Activated naive CD4-positive, alpha-beta T cell treated with anti-CD3 and anti-CD28 coated beads for 36 hours (primary cell): ENCODE measurements at regions of chr1 and their contacts with region 1.

Region 1: DNA sequence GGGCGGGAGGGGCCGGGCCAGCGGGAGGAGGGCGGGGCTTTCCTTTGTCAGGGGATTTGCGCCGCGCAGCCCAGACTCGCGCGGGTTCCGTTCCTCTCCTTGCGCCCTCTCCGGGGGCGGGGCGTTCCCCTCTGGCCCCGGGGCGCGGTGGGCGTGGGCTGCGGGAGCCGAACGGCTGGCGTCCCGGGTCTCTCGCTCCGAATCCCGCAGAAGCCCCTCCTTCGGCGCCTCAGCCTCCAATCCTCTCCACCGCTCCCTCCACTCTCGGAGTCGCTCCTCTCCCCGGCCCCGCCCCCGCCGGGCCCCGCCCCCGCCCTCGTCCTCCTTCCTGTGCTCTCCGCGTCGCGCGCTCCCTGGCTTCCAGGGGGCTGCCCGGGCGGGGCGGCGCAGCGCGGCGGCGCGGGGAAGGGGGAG is 82.8 kb upstream of the BMP8A start:
- DNase-seq: peak; percentile 82
- H3K4me3 Mint-ChIP-seq: peak overlapping the region; percentile 81
- H3K27ac Mint-ChIP-seq: no peak overlapping the region
- H3K4me1 Mint-ChIP-seq: peaks cover 60% of the 10 kb centered on the region
- H3K27me3 Mint-ChIP-seq: no peaks in the 10 kb centered on the region

Region 2: DNA sequence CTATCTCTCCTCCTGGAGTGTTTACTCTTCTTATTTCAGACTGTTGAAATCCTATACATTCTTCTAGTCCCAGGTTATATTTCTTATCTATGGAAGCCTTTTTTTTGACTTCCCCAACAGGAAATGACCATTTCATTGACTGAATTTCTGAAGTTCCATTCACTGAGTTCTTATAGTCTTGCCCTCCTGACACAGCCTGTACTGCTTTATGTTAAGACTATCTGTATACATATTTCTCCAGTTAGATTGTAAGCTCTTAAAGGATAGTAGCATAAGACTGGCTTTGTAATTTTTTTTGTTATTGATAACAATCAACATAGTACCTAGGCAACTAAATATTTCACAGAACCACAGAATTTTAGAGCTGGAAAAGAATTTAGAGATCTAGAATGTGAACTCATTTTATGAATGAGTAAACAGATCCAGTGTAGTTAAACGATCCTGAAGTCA is 219.0 kb before region 1 on chr1:
- CTCF ChIA-PET with region 1: interaction called, 25 read pairs
- intact Hi-C with region 1: loop called (anchors 1 kb)
- DNase-seq: no peak
- H3K4me3 Mint-ChIP-seq: no peak overlapping the region
- H3K27ac Mint-ChIP-seq: no peak overlapping the region
- H3K4me1 Mint-ChIP-seq: peaks cover 86% of the 10 kb centered on the region
- H3K27me3 Mint-ChIP-seq: no peaks in the 10 kb centered on the region

Region 3: GRCh38 chr1:39360731-39361130 is 47.9 kb before region 1 on chr1:
- CTCF ChIA-PET with region 1: interaction called, 10 read pairs
- intact Hi-C with region 1: no loop called
- DNase-seq: no peak
- H3K4me3 Mint-ChIP-seq: no peak overlapping the region
- H3K27ac Mint-ChIP-seq: no peak overlapping the region
- H3K4me1 Mint-ChIP-seq: no peaks in the 10 kb centered on the region
- H3K27me3 Mint-ChIP-seq: no peaks in the 10 kb centered on the region

Region 4: DNA sequence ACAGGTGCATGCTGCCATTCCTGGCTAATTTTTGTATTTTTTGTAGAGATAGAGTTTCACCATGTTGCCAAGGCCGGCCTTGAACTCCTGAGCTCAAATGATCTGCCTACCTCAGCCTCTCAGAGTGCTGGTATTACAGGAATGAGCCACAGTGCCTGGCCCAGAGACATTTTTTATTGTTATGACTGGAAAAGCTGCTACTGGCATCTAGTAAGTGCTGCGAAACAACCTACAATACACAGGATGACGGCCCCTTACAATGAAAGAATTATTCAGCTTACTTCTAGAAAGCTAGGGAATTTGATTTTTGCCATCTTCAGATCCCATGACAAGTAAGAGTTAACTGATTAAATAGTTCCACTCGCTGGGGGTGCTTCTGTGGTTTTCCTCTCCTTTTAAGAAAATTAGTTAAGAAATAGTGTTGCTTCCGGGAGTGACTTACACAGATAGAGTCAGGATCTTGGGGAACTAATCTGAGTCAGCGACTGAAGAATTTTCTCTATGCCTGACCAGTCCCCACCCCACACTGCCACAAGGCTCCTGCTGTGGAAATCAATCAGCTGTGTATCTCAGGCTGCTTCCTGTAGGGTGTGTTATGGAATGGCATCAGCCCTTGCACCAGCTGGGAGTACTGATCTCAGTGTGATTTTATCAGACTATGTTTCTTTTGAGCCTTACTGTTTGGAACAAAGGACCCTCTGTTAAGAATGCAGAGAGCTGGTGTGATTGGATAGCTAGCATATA is 10.2 kb before region 1 on chr1:
- CTCF ChIA-PET with region 1: interaction called, 42 read pairs
- intact Hi-C with region 1: loop called (anchors 1 kb)
- DNase-seq: peak; percentile 58
- H3K4me3 Mint-ChIP-seq: no peak overlapping the region
- H3K27ac Mint-ChIP-seq: peak overlapping the region; percentile 68
- H3K4me1 Mint-ChIP-seq: peaks cover 63% of the 10 kb centered on the region
- H3K27me3 Mint-ChIP-seq: no peaks in the 10 kb centered on the region

Region 5: DNA sequence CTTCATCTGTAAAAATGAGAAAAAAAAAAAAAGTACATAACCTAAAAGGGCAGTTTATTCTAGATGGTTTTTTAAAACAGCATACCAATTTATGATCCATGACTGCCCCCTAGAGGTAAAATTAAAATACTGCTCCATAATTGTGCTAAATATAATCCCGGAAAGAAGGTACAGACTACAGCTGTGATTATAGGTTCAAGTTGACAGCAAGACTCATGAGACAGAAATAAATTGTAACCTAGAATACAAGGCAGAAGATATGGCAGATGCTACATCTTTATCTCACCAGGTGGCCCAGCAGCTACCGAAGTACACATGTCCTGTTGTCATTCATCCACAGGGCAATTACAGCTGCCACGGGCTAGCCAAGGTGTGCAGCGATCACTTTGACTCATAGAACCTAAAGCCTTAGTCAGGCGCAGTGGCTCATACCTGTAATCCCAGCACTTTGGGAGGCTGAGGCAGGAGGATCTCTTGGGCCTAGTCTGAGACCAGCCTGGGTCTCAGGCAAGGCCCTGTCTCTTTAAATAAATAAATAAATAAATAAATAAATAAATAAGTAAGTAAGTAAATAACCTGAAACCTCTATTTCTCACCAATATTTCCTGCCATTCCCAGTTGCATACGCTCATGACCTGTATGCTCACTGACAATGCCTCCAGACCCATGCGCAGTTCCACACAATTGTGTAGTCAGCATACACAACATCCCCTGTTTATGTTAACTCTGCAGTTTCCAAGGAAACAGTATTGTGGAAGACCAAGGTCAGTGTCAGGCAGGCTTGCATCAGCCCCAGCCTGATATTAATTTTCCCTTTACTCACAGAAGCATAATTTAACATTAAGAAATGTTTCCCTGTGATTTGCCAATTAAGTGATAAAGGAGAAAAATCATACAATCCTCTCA is 311.7 kb after region 1 on chr1:
- CTCF ChIA-PET with region 1: no interaction called
- intact Hi-C with region 1: loop called (anchors 10 kb)
- DNase-seq: no peak
- H3K4me3 Mint-ChIP-seq: no peak overlapping the region
- H3K27ac Mint-ChIP-seq: no peak overlapping the region
- H3K4me1 Mint-ChIP-seq: no peaks in the 10 kb centered on the region
- H3K27me3 Mint-ChIP-seq: peaks cover 36% of the 10 kb centered on the region